Pancreas (tissue), 10 donors: ENCODE measurements at regions of chr18 and their contacts with region 1.

Region 1: DNA sequence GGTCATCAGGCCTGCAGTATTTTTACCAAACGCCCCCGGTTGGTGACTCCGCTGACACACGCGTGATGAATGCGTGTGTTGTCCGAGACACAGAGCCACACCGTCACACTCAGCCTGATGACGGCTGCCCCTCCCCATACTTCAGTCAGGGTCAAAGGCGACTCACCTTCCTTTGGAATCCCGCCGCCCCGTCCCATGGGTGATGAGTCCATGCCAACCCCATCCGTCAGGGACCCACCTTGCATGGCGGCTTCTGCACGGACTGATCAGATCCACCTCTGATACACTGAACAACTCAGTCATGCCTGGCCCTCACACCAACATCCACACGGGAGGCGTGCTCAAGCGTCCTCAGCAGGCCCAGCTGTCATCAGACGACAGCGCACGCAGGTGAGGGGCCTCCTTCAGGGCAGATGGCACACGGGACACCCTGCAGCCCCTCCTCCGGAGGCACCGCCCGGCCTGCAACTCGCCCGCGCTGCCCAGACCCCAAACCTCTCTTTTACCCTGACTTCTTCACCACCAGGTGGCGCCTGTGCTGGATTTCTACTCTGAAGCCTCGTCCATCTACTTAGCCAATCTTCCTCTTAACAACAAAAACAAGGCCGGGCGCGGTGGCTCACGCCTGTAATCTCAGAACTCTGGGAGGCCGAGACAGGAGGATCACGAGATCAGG is 89.2 kb downstream of the ZNF516 start:
- DNase-seq: peak in 2 of 6 donors; percentile 39 to 72
- ATAC-seq: peak in 3 of 4 donors; percentile 54 to 67 (median 64)
- H3K4me3 ChIP-seq: no peak overlapping the region
- H3K27ac ChIP-seq: no peak overlapping the region
- H3K4me1 ChIP-seq: peaks cover 0 to 4% (median 0%) of the 10 kb centered on the region in 3 donors
- H3K27me3 ChIP-seq: no peaks in the 10 kb centered on the region
- CTCF ChIP-seq: peak; percentile 12 to 41 (median 30)

Region 2: GRCh38 chr18:76620321-76621170 is 214.7 kb after region 1 on chr18:
- intact Hi-C with region 1: loop called in 1 of 3 experiments (anchors 10 kb)
- DNase-seq: peak in 3 of 6 donors; percentile 26 to 63 (median 41)
- ATAC-seq: peak in 3 of 4 donors; percentile 68 to 77 (median 75)
- H3K4me3 ChIP-seq: peak overlapping the region in 1 of 4 donors; percentile 40
- H3K27ac ChIP-seq: peak overlapping the region in 3 of 4 donors; percentile 20 to 78 (median 70)
- H3K4me1 ChIP-seq: peaks cover 0 to 14% (median 10%) of the 10 kb centered on the region in 3 donors
- H3K27me3 ChIP-seq: no peaks in the 10 kb centered on the region
- CTCF ChIP-seq: no peak

Region 3: DNA sequence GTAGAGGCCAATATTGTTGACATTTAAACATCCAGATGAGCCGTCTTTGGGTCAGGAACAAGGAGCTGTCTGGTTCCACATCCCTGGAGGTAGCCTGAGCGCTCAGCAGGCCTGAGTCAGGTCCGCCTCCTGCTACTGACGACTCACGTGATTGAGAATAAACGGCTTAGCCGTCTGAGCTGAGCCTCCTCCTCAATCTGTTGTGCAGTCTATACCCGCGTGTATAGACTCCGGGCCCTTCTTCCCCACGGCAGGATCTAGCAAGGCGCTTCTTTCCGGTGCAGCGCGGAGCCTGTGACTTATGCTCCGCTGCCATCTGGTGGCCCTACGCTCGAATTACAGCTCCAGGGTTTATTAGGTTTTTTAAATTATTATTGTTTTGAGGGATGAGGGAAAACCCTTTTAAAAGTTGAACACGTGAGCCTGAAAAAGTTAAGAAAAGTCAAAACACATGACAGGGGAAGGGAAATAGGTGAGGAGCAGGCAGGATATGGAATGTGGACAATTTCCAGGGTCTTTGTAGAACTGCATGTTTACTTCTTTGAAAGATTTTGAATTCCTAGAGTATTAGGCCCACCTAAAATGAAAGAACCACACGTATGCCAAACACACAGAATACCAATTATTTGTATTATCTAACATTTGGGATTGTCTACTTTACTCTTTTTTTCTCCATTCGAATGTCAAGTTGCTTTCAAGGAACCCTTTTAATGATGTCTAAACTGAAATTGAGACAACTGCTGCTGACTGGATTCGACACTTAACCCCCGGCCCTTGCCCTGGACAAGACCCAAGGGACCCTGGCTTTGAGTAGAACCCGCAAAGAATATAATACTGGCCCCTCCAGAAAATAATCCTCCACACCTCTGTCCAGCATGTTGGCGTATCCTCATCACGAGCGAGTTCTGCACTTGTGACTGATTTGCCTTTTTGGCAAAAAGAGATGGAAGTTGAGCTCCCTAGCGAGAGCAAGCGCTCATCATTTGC is 304.1 kb after region 1 on chr18:
- intact Hi-C with region 1: loop called in 2 of 3 experiments (anchors 5 to 10 kb)
- DNase-seq: peak in 5 of 6 donors; percentile 9 to 76 (median 57)
- ATAC-seq: peak; percentile 73 to 98 (median 94)
- H3K4me3 ChIP-seq: no peak overlapping the region
- H3K27ac ChIP-seq: no peak overlapping the region
- H3K4me1 ChIP-seq: no peaks in the 10 kb centered on the region
- H3K27me3 ChIP-seq: no peaks in the 10 kb centered on the region
- CTCF ChIP-seq: peak; percentile 63 to 83 (median 79)